WTC11 (cell line): ENCODE measurements at regions of chrX and their contacts with region 1.

Region 1: GRCh38 chrX:69615779-69616456 is at the start of gene EDA:
- DNase-seq: peak; percentile 87
- ATAC-seq: peak; percentile 97
- H3K4me3 Mint-ChIP-seq: peak within 1 kb of the TSS; percentile 78
- H3K27ac Mint-ChIP-seq: peak within 1 kb of the TSS; percentile 36; the same call in 1 of the 2 replicates
- H3K4me1 Mint-ChIP-seq: peaks cover 11% of the 10 kb centered on the region
- H3K27me3 Mint-ChIP-seq: peaks cover 14% of the 10 kb centered on the region
- CTCF ChIP-seq: no peak
- total RNA-seq, gene EDA: 11.3 to 15.1 TPM (median 12.9 TPM) in 3 replicates

Region 2: GRCh38 chrX:69503782-69504625 is 111.9 kb before region 1 on chrX and contains the start of gene NALF2:
- CTCF ChIA-PET with region 1: interaction called, 10 read pairs
- POLR2A ChIA-PET with region 1: no interaction called
- DNase-seq: peak; percentile 74
- ATAC-seq: peak; percentile 77
- H3K4me3 Mint-ChIP-seq: peak within 1 kb of the TSS; percentile 77
- H3K27ac Mint-ChIP-seq: no peak within 1 kb of the TSS
- H3K4me1 Mint-ChIP-seq: peaks cover 20% of the 10 kb centered on the region
- H3K27me3 Mint-ChIP-seq: peaks cover 11% of the 10 kb centered on the region
- CTCF ChIP-seq: no peak
- total RNA-seq, gene NALF2: 13.1 to 14.0 TPM (median 13.7 TPM) in 3 replicates

Region 3: DNA sequence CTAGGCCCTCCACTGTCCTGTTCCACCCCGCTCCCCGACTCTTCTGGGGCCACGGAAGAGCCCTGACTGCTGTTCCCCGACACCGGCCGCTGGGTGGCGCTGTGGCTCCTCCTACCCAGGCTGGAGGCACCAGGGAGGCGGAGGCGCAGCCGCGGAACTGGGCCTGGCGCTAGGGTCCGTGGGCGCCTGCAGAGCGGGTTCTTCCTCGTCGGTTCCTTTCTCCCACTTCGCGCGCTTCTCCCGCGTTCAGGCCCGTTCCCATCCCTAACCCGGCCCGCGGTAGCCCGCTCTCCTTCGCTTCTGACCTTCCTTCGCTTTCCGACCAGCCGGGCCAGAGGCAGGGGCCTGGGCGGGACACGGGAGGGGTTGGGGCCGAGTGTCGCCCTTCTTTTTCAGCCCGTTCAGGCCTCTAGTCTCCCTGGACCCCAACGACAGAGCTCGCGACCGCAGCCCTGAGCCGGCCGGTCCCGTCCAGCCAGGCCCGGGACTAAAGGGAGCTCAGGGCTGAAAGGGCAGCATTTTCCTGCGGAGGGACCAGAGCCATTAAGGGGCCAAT is 77.5 kb before region 1 on chrX:
- CTCF ChIA-PET with region 1: interaction called, 16 read pairs
- POLR2A ChIA-PET with region 1: interaction called, 5 read pairs
- DNase-seq: peak; percentile 77
- ATAC-seq: peak; percentile 90
- H3K4me3 Mint-ChIP-seq: peak overlapping the region; percentile 77
- H3K27ac Mint-ChIP-seq: no peak overlapping the region
- H3K4me1 Mint-ChIP-seq: peaks cover 11% of the 10 kb centered on the region
- H3K27me3 Mint-ChIP-seq: peaks cover 3% of the 10 kb centered on the region; the same call in 1 of the 2 replicates
- CTCF ChIP-seq: peak; percentile 64

Region 4: GRCh38 chrX:69603566-69604194 is 12.2 kb before region 1 on chrX:
- CTCF ChIA-PET with region 1: interaction called, 17 read pairs
- POLR2A ChIA-PET with region 1: interaction called, 4 read pairs
- DNase-seq: no peak
- ATAC-seq: peak; percentile 68
- H3K4me3 Mint-ChIP-seq: no peak overlapping the region
- H3K27ac Mint-ChIP-seq: no peak overlapping the region
- H3K4me1 Mint-ChIP-seq: peaks cover 33% of the 10 kb centered on the region
- H3K27me3 Mint-ChIP-seq: peaks cover 18% of the 10 kb centered on the region
- CTCF ChIP-seq: no peak